Transverse colon (tissue), 4 donors: ENCODE measurements at regions of chr7 and their contacts with region 1.

Region 1: GRCh38 chr7:47045207-47046051 is 536.5 kb downstream of the TNS3 start:
- DNase-seq: no peak
- H3K4me3 ChIP-seq: no peak overlapping the region
- H3K27ac ChIP-seq: peak overlapping the region in 2 of 4 donors; percentile 12 to 21
- H3K4me1 ChIP-seq: peaks cover 0 to 16% (median 4%) of the 10 kb centered on the region in 4 donors
- H3K27me3 ChIP-seq: no peaks in the 10 kb centered on the region
- CTCF ChIP-seq: no peak
- EP300 ChIP-seq: no peak
- POLR2A ChIP-seq: no peak

Region 2: DNA sequence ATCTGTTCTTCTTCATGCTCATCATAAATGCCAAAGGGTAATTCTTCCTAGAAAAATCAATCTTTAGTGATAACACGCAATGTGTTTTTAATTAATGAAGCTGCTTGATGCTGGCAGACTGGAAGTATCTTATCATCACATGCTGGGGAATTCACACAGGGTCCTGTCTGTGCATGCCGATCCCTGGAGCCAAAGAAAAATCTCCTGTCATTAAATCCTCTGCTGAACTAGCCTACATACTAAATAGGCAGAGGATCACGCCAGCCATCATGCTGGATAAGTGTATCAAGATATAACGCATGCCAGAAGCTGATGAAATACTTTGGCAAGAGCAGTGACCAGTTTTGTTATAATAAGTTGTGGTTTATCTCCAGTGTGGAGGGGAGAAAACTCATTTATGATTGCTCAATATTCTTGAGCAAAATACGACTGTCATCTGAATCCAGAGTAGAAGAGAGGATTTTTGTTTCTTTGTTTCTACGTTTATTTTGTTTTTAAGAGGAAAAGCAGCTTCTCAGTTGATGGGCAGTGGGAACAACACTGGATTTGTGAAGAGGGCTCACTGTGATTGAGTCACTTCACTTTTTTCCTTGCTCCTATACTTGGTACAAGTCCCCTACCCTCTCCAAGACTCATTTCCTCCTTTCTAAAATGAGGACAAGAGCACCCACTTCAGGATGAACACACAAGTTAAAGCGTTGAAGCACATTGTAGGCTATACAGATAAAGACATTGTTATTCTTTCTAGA is 112.6 kb before region 1 on chr7:
- in situ Hi-C with region 1: loop called in 1 of 4 experiments (anchors 25 kb)
- intact Hi-C with region 1: no loop called
- DNase-seq: no peak
- H3K4me3 ChIP-seq: no peak overlapping the region
- H3K27ac ChIP-seq: peak overlapping the region in 3 of 4 donors; percentile 32 to 70 (median 39)
- H3K4me1 ChIP-seq: no peaks in the 10 kb centered on the region
- H3K27me3 ChIP-seq: no peaks in the 10 kb centered on the region
- CTCF ChIP-seq: no peak
- EP300 ChIP-seq: no peak
- POLR2A ChIP-seq: no peak